ENCODE measurements at regions of chr2 and their contacts with region 1.

Region 1: GRCh38 chr2:217467331-217467730 is 535.5 kb downstream of the TNS1 start:
- DNase-seq: no peak
- H3K4me3 ChIP-seq: no peak overlapping the region
- H3K27ac ChIP-seq: no peak overlapping the region
- H3K4me1 ChIP-seq: no peaks in the 10 kb centered on the region
- H3K27me3 ChIP-seq: no peaks in the 10 kb centered on the region
- CTCF ChIP-seq: no peak
- EP300 ChIP-seq: no peak
- POLR2A ChIP-seq: no peak
- RAD21 ChIP-seq: no peak

Region 2: DNA sequence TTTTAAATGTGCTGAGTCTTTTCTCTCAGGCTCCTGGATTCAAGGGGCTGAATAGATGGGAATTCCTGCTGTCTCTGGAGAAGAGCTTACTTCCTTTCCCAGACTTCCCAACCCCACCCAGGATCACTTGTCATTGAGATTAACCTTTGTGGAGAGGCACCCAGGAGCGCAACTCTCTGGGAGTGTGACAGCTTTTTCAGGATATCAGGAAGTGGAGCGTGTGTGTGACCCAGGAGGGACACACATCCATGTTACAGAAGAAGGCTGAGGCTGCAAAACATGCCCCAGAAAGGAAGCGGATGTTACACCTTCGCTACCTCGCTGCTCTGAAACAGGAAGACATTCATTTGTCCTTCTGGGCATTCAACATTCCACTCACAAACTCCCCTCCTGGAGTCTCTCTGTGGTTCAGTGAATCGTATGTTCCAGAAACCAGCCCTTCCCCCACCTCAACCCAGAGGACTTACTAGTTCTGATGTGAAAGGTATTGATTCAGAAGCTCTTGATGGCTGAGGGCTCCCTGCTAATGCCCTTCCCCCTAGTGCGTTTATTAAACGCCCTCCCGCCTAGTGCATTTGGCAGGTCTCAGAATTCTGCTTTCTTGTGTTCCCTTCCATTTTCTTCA is 11.6 kb after region 1 on chr2:
- CTCF ChIA-PET with region 1: interaction called, 26 read pairs
- POLR2A ChIA-PET with region 1: no interaction called
- DNase-seq: peak in 1 of 2 experiments; percentile 45
- H3K4me3 ChIP-seq: no peak overlapping the region; a peak in 1 of 8 replicates
- H3K27ac ChIP-seq: no peak overlapping the region
- H3K4me1 ChIP-seq: peaks cover 0 to 6% (median 2%) of the 10 kb centered on the region in 4 experiments; a peak in 4 of 7 replicates
- H3K27me3 ChIP-seq: no peaks in the 10 kb centered on the region; a peak in 1 of 7 replicates
- CTCF ChIP-seq: no peak
- EP300 ChIP-seq: no peak
- POLR2A ChIP-seq: no peak
- RAD21 ChIP-seq: no peak

Measured in H1 (cell line).